ENCODE measurements at regions of chr1 and their contacts with region 1.

Region 1: DNA sequence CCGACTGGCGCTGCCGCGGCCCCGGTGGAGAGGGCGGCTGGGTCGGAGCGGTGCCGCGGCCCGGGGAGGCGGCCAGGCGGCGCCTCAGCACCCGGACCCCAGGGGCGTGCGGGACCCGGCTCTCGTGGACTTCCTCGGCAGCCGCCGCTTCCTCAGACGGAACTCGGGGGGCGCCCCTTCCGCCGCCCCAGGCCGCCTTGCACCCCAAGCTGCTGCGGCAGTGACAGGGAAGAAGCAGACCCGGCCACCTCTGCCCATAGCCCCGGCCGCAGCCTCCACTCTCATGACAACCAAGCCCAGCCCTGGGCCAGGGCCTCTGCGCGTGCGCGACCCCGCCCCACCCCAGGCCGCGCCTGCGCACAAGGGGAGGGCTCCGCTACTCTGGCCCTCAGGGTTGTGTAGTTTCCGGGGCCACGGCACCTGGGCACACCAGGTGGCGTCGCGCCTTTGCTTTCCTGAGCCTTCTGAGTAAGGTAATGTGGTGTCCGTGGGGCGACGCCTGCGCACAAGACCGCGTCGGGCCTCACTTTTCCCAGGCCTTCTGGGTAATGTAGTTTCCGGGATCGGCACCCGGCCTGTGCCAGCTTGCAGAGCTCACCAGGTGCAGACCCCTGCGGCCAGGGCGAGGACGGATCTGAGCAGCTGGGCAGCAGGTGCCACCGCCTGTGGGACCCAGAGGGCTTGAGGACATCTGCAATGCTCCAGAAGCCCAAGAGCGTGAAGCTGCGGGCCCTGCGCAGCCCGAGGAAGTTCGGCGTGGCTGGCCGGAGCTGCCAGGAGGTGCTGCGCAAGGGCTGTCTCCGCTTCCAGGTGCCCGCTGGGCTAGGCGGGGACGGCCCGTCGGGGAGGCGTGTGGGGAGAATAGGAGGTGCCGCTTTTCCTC is at the starts of genes CEP104 and DFFB:
- DNase-seq: peak; percentile 97
- H3K4me3 Mint-ChIP-seq: peak within 1 kb of the TSS; percentile 94
- H3K27ac Mint-ChIP-seq: peak within 1 kb of the TSS; percentile 83
- H3K4me1 Mint-ChIP-seq: peaks cover 15% of the 10 kb centered on the region
- H3K27me3 Mint-ChIP-seq: no peaks in the 10 kb centered on the region
- total RNA-seq, gene CEP104: 43.4 and 55.5 TPM in 2 replicates
- total RNA-seq, gene DFFB: 13.7 and 15.8 TPM in 2 replicates

Region 2: DNA sequence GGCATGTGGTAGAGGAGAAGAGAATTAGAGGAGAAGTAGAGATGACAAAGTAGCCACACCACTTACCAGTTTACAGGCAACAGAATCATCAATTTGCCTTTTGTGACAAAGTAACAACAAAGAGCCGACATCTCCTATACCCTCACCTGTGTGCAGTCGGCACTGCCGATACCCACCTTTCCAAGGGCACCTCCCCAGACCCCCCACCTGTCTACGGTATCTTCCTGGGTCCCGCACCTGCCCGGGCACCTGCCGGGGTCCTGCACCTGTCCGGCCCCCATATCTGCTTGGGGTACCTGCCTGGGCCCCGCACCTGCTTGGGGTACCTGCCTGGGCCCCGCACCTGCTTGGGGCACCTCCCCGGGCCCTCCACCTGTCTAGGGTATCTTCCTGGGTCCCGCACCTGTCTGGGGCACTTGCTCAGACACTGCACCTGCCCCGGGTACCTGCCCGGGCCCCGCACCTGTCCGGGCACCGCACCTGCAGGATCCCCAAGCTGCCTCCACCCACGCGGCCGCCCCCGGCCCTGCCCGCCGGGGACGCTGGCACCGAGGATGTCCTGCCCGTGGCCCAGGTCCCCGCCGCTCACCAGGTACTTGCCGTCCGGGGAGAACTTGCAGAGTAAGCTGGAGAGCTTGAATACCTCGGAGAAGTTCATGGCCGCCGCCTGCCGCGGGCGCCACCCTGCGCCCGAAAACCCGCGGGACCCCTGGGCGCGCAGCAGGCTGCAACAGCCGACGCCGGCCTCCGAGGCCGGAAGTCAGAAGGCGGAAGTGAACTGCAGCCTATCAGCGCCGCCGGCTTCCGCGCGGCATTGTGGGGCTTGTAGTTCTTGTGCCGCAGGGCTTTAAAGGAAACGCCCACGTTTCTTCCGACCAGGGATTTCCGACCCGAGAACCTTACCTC is 207.6 kb before region 1 on chr1 and contains the start of gene WRAP73:
- intact Hi-C with region 1: loop called (anchors 1 kb)
- DNase-seq: peak; percentile 86
- H3K4me3 Mint-ChIP-seq: peak within 1 kb of the TSS; percentile 84
- H3K27ac Mint-ChIP-seq: peak within 1 kb of the TSS; percentile 58
- H3K4me1 Mint-ChIP-seq: peaks cover 23% of the 10 kb centered on the region
- H3K27me3 Mint-ChIP-seq: peaks cover 25% of the 10 kb centered on the region
- total RNA-seq, gene WRAP73: 44.9 and 45.5 TPM in 2 replicates

Region 3: GRCh38 chr1:3746830-3747521 is 110.2 kb before region 1 on chr1:
- intact Hi-C with region 1: loop called (anchors 1 kb)
- DNase-seq: peak; percentile 86
- H3K4me3 Mint-ChIP-seq: peak overlapping the region; percentile 84
- H3K27ac Mint-ChIP-seq: no peak overlapping the region
- H3K4me1 Mint-ChIP-seq: peaks cover 31% of the 10 kb centered on the region
- H3K27me3 Mint-ChIP-seq: peaks cover 2% of the 10 kb centered on the region

Region 4: GRCh38 chr1:3772027-3772714 is 85.0 kb before region 1 on chr1:
- intact Hi-C with region 1: loop called (anchors 1 kb)
- DNase-seq: peak; percentile 80
- H3K4me3 Mint-ChIP-seq: peak overlapping the region; percentile 75
- H3K27ac Mint-ChIP-seq: peak overlapping the region; percentile 52
- H3K4me1 Mint-ChIP-seq: peaks cover 8% of the 10 kb centered on the region
- H3K27me3 Mint-ChIP-seq: peaks cover 9% of the 10 kb centered on the region

Region 5: DNA sequence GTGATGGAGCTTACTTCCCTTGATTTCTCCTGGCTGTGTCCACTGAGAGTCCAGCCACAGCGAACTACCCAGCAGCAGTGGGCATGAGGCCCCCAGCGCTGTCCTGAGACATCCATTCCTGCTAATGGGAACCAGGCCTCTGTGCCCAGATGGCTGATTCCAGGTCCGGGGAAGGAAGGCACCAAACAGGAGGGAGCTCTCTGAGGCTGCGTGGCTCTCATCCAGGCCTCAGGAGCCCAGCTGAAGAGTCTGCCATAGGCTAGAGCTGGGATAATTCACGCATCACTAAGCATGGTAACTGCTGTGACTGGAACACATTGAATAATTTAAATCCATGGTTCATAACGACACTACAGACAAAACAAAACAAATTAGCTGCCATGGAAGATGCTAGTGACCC is 36.1 kb before region 1 on chr1:
- intact Hi-C with region 1: no loop called
- DNase-seq: no peak
- H3K4me3 Mint-ChIP-seq: no peak overlapping the region
- H3K27ac Mint-ChIP-seq: no peak overlapping the region
- H3K4me1 Mint-ChIP-seq: no peaks in the 10 kb centered on the region
- H3K27me3 Mint-ChIP-seq: no peaks in the 10 kb centered on the region

Measured in activated T-helper 1 cell treated with anti-CD3 and anti-CD28 coated beads, Interleukin-12 subunit alpha, Interleukin-12 subunit beta, Interleukin-2, Interleukin-4 antibody, amounts not matched to agents 30 ng/mL and 10 ng/mL and 1 ng/mL, durations not matched to agents 14 hours and 24 hours and 36 hours (primary cell).